Activated naive CD4-positive, alpha-beta T cell treated with anti-CD3 and anti-CD28 coated beads for 36 hours (primary cell): ENCODE measurements at regions of chr16 and their contacts with region 1.

Region 1: DNA sequence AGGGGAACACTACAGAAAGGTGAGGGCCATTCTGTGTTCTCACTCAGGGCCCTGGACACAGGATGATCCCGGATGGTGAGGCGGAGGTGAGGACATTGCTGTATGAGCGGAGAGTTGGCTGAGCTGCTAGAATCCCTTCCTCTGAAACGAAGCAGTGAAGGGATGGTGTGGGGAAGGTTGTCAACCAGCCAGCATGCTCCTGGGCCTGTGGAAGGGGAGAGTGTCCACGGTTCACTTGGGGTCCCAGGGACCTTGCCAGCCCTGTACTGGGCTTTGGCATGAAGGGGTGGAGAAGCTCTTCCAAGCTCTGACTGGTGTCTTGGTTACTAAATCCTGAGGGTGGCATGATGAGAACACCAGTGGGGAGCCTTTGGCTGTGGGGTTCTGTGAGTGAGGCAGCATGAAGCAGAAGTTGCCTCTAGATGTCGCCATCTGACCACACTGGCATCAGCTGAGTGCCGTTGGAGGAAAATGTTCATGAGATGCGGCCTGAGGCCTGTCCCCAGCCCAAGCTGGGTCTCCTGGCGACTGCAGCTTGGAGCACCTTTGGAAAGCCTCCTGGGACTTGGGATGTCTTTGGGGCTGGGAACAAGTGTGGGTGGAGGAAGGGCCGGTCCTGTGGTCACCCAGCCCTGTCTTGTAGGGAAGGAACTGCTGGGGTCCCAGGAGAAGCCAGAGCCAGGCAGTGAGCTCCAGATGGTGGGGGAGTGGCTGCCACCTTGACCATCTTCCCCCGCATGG is 14.8 kb downstream of the PDP2 start:
- DNase-seq: peak; percentile 81
- H3K4me3 Mint-ChIP-seq: no peak overlapping the region
- H3K27ac Mint-ChIP-seq: no peak overlapping the region
- H3K4me1 Mint-ChIP-seq: peaks cover 8% of the 10 kb centered on the region
- H3K27me3 Mint-ChIP-seq: no peaks in the 10 kb centered on the region

Region 2: DNA sequence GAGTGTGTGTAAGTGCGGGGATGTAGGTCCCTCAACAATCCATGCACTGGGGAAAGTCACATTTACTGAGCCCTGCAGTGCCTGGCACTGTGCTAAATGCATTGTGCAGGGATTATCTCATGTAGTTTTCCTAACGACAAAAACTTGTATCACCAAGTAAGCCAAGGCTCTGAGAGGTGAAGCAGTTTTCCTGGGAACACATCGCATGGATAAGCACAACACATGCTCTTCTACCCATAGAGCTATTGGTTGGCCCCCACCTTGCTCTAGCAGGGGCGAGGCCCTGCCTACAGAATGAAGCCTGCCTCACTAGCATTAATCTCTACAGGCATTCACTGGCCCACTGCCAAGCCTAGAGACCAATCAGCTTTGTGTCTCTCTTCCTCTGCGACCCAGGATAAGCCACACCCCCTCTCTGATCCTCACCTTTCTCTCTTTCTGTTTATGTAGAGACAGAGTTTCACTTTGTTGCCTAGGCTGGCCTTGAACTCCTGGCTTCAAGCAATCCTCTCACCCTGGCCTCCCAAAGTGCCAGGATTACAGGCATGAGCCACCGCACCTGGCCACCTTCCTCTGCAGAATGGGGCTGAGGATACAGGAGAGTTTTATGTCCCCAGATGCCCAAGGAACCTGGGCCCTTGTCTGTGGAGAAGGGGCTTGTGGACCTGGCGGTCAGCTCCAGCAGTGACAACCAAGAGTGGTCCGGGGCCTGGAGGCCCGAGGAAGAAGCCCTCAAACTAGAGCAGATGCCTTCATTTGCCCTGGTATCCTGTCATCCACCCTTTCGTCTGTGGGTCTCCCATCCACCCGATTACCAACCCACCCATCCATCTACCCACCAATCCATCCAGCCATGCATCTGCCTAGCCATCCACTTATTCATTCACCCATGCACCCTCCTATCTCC is 10.8 kb after region 1 on chr16:
- CTCF ChIA-PET with region 1: interaction called, 10 read pairs
- intact Hi-C with region 1: no loop called
- DNase-seq: peak; percentile 81
- H3K4me3 Mint-ChIP-seq: no peak overlapping the region
- H3K27ac Mint-ChIP-seq: no peak overlapping the region
- H3K4me1 Mint-ChIP-seq: peaks cover 8% of the 10 kb centered on the region
- H3K27me3 Mint-ChIP-seq: no peaks in the 10 kb centered on the region

Region 3: GRCh38 chr16:66911112-66911511 is 16.0 kb after region 1 on chr16:
- CTCF ChIA-PET with region 1: interaction called, 10 read pairs
- intact Hi-C with region 1: no loop called
- DNase-seq: no peak
- H3K4me3 Mint-ChIP-seq: no peak overlapping the region
- H3K27ac Mint-ChIP-seq: no peak overlapping the region
- H3K4me1 Mint-ChIP-seq: peaks cover 3% of the 10 kb centered on the region
- H3K27me3 Mint-ChIP-seq: no peaks in the 10 kb centered on the region

Region 4: DNA sequence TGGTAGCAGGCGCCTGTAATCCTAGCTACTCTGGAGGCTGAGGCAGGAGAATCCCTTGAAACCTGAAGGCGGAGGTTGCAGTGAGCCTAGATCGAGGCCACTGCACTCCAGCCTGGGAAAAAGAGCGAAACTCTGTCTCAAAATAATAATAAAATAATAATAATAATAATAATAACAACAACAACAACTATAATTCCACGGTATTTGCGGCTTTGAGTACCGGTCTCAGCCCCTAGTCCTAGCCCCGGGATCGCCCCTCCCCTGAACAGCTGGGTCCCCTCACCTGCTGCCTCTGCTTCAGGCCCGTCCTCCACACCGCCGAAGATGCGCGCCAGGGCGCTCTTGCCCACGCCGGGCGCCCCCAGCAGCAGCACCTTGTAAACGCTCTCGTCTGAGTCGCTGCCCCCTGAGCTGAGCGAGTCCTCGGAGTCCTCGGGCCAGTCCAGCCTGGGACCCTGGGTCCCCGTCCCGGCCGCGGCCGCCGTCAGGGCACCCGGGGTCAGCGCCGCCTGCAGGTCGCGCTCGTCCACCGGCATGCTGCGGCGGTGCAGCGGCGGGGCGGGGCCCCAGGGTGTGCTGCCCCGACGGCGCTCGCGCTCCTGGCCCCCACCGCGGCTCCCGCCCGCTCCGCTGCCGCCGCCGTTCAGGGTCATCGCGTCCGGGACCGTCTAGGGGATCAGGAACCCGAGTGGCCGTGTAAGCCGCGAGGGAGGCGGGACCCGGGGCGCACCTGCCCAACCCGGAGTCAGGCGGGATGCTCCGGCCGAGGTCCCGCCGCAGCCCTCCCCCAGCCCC is 29.6 kb after region 1 on chr16:
- CTCF ChIA-PET with region 1: interaction called, 44 read pairs
- intact Hi-C with region 1: loop called (anchors 1 kb)
- DNase-seq: peak; percentile 42
- H3K4me3 Mint-ChIP-seq: peak overlapping the region; percentile 66
- H3K27ac Mint-ChIP-seq: no peak overlapping the region
- H3K4me1 Mint-ChIP-seq: peaks cover 10% of the 10 kb centered on the region
- H3K27me3 Mint-ChIP-seq: peaks cover 24% of the 10 kb centered on the region

Region 5: DNA sequence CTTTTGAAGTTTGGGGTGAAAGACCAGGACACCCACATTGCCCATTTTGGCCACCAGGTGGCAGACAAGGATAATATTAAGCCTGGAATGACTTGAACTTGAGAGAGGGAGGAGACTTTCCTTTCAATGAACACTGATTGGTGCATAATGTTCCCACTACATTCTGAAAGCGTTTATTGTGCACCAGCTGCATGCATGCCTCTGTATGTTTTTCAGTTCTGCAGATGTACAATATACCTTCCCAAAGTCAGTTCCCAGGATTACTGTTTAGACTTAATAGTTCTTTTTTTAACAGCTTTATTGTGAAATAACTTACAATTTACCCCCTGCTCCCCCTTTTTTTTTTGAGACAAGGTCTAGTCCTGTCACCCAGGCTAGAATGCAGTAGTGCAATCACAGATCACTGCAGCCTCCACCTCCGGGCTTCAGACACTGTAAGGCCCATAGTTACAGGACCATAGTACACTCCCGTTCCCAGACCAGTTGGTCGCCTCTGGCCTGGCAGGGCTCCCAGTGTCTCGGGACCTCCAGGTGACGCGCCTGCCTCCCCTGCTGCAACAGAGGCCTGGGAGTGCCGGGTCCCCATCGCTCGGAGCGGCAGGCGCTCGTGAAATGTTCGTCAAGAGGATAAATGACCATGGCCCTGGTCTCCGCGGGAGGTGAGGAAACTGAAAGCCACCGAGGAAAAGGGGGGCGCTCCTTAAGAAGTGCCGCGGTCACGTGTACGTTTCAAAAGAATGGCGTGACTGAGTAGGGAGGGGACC is 52.4 kb after region 1 on chr16:
- CTCF ChIA-PET with region 1: no interaction called
- intact Hi-C with region 1: loop called (anchors 2 kb)
- DNase-seq: peak; percentile 95
- H3K4me3 Mint-ChIP-seq: peak overlapping the region; percentile 81
- H3K27ac Mint-ChIP-seq: no peak overlapping the region
- H3K4me1 Mint-ChIP-seq: peaks cover 17% of the 10 kb centered on the region
- H3K27me3 Mint-ChIP-seq: peaks cover 34% of the 10 kb centered on the region

Region 6: DNA sequence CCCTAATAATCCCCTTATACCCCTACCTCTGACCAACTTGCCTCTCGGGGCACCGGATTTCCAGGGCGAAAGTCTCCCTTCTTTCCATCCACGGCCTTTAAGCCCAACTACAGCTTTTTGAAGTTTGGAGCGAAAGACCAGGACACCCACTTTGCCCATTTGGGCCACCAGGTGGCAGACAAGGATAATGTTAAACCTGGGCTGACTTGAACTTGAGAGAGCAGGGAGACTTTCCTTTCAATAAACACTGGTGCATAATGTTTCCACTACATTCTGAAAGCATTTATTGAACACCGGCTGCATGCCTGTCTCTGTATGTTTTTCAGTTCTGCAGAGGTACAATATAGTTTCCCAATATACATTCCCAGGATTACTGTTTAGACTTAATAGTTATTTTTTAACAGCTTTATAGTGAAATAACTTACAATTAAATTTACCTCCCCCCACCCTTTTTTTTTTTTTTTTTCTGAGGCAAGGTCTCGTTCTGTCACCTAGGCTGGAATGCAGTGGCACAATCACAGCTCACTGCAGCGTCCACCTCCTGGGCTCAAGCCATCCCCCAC is 59.1 kb after region 1 on chr16:
- CTCF ChIA-PET with region 1: interaction called, 3 read pairs
- intact Hi-C with region 1: loop called (anchors 2 kb)
- DNase-seq: peak; percentile 90
- H3K4me3 Mint-ChIP-seq: no peak overlapping the region
- H3K27ac Mint-ChIP-seq: no peak overlapping the region
- H3K4me1 Mint-ChIP-seq: peaks cover 14% of the 10 kb centered on the region
- H3K27me3 Mint-ChIP-seq: peaks cover 27% of the 10 kb centered on the region

Region 7: GRCh38 chr16:67082891-67083290 is 187.8 kb after region 1 on chr16:
- CTCF ChIA-PET with region 1: no interaction called
- intact Hi-C with region 1: no loop called
- DNase-seq: no peak
- H3K4me3 Mint-ChIP-seq: no peak overlapping the region
- H3K27ac Mint-ChIP-seq: no peak overlapping the region
- H3K4me1 Mint-ChIP-seq: no peaks in the 10 kb centered on the region
- H3K27me3 Mint-ChIP-seq: no peaks in the 10 kb centered on the region